PC-3 (cell line): ENCODE measurements at regions of chr2 and their contacts with region 1.

Region 1: GRCh38 chr2:54899576-54900200 is 150.6 kb downstream of the RTN4 start:
- DNase-seq: peak; percentile 92
- ATAC-seq: peak; percentile 59
- H3K4me3 ChIP-seq: peak overlapping the region; percentile 12; the same call in 1 of the 2 replicates
- H3K27ac ChIP-seq: peak overlapping the region; percentile 35
- H3K4me1 ChIP-seq: peaks cover 37% of the 10 kb centered on the region
- H3K27me3 ChIP-seq: no peaks in the 10 kb centered on the region
- CTCF ChIP-seq: peak; percentile 89

Region 2: GRCh38 chr2:54728669-54729120 is 171.0 kb before region 1 on chr2:
- CTCF ChIA-PET with region 1: interaction called, 8 read pairs
- POLR2A ChIA-PET with region 1: no interaction called
- intact Hi-C with region 1: loop called (anchors 1 kb)
- DNase-seq: peak; percentile 95
- ATAC-seq: peak; percentile 83
- H3K4me3 ChIP-seq: no peak overlapping the region; the same call in 1 of the 2 replicates
- H3K27ac ChIP-seq: peak overlapping the region; percentile 69
- H3K4me1 ChIP-seq: peaks cover 28% of the 10 kb centered on the region
- H3K27me3 ChIP-seq: no peaks in the 10 kb centered on the region
- CTCF ChIP-seq: peak; percentile 63

Region 3: DNA sequence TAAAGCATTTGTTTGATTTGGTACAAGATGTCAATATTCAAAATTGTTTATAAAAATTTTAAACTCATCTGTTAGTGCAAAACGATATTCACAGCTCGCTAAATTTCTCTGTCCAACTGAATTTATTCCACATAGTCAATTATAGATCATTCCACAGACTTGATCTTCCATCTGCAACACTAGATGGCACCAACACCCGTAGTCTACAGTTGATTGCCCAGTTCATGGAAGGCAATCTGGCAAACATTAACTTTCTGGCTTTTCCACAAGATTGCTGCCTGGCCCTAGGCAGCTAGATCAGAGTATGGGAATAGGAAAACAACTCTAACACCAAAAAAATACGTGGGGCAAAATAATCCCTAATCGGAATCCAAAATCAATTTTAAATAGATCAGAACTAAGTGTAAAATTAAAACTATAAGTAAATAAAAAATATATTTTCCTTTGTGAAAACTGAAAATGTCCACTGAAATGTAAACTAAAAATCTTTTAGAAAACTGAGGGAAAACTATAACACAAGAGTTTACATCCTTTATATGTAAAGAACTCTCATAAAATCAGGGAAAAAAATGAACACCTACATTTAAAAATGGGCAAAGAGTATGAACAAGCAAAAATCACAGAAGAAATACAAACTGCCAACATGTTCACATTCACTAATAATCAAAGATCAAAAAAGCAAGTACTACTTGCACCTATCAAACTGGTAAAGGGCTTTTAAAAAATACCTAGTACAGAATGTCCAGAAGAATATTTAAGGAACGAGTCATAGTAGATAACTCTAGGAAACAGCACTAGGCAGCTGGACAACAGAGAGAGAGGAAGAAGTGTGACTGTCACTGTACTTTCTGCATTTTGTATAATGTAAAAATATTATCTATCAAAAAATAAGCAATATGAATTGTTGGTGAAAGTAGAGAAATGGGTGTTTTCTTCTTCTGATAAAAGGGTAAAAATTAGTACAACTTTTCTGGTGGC is 115.6 kb after region 1 on chr2:
- CTCF ChIA-PET with region 1: interaction called, 20 read pairs
- POLR2A ChIA-PET with region 1: no interaction called
- intact Hi-C with region 1: loop called (anchors 1 kb)
- DNase-seq: peak; percentile 83
- ATAC-seq: peak; percentile 76
- H3K4me3 ChIP-seq: no peak overlapping the region
- H3K27ac ChIP-seq: no peak overlapping the region
- H3K4me1 ChIP-seq: peaks cover 69% of the 10 kb centered on the region
- H3K27me3 ChIP-seq: no peaks in the 10 kb centered on the region
- CTCF ChIP-seq: peak; percentile 88

Region 4: DNA sequence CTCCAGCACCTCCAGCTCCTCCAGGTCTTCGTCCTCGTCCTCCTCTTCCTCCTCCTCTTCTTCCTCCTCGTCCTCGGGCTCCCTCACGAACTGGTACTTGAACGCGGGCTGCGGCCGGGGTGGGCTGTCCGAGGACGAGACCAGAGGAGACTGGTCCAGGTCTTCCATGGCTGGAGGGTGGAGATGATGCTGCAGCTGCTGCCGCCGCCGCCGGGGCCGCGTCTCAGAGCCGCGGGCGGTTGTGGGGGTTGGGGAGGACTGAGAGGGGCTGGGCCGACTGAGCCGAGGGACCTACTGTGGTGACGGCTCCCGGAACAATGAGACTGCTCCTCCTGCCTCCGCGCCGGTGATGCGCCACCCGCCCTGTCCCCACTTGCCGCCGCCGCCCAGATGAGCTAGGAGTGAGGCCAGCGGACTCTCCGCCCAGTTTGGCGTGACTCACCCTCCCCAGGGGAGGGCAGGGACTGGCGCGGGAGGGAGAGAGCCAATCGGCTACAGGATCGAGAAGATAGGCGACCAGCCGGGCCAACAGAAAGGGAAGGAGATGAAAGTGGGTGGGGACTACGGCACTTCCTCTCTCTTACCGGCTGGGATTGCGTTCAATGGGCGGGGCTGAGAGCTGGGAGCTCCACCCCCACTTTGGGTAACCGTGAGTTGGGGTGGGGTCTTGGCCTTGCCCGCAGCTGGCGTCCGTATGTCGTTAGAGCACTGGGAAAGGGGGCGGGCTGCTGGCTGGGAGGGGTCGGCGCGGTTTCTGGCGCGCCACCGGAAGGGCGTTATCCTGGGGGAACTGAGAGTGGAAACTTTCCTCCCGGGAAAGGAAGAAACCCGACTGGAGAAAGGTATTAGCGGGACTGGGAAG is 150.7 kb after region 1 on chr2 and contains the start of gene RTN4:
- CTCF ChIA-PET with region 1: interaction called, 11 read pairs
- POLR2A ChIA-PET with region 1: interaction called, 4 read pairs
- intact Hi-C with region 1: loop called (anchors 1 kb)
- DNase-seq: peak; percentile 99
- ATAC-seq: peak; percentile 74
- H3K4me3 ChIP-seq: peak within 1 kb of the TSS; percentile 74
- H3K27ac ChIP-seq: peak within 1 kb of the TSS; percentile 97
- H3K4me1 ChIP-seq: peaks cover 26% of the 10 kb centered on the region
- H3K27me3 ChIP-seq: no peaks in the 10 kb centered on the region
- CTCF ChIP-seq: no peak
- total RNA-seq, gene RTN4: 150 and 170 TPM in 2 replicates

Region 5: GRCh38 chr2:55093381-55093780 is 193.7 kb after region 1 on chr2:
- CTCF ChIA-PET with region 1: no interaction called
- POLR2A ChIA-PET with region 1: no interaction called
- intact Hi-C with region 1: no loop called
- DNase-seq: peak; percentile 71
- ATAC-seq: peak; percentile 81
- H3K4me3 ChIP-seq: no peak overlapping the region
- H3K27ac ChIP-seq: no peak overlapping the region
- H3K4me1 ChIP-seq: peaks cover 22% of the 10 kb centered on the region
- H3K27me3 ChIP-seq: no peaks in the 10 kb centered on the region
- CTCF ChIP-seq: no peak

Region 6: GRCh38 chr2:55175254-55176025 is 275.8 kb after region 1 on chr2:
- CTCF ChIA-PET with region 1: interaction called, 6 read pairs
- POLR2A ChIA-PET with region 1: interaction called, 3 read pairs
- intact Hi-C with region 1: loop called (anchors 1 kb)
- DNase-seq: peak; percentile 72
- ATAC-seq: peak; percentile 83
- H3K4me3 ChIP-seq: no peak overlapping the region
- H3K27ac ChIP-seq: no peak overlapping the region
- H3K4me1 ChIP-seq: no peaks in the 10 kb centered on the region
- H3K27me3 ChIP-seq: no peaks in the 10 kb centered on the region
- CTCF ChIP-seq: peak; percentile 91

Region 7: GRCh38 chr2:55511508-55512124 is 611.9 kb after region 1 on chr2:
- CTCF ChIA-PET with region 1: no interaction called
- POLR2A ChIA-PET with region 1: no interaction called
- intact Hi-C with region 1: loop called (anchors 5 kb)
- DNase-seq: peak; percentile 73
- ATAC-seq: peak; percentile 84
- H3K4me3 ChIP-seq: no peak overlapping the region
- H3K27ac ChIP-seq: no peak overlapping the region
- H3K4me1 ChIP-seq: no peaks in the 10 kb centered on the region
- H3K27me3 ChIP-seq: no peaks in the 10 kb centered on the region
- CTCF ChIP-seq: peak; percentile 70